ENCODE measurements at regions of chr16 and their contacts with region 1.

Region 1: DNA sequence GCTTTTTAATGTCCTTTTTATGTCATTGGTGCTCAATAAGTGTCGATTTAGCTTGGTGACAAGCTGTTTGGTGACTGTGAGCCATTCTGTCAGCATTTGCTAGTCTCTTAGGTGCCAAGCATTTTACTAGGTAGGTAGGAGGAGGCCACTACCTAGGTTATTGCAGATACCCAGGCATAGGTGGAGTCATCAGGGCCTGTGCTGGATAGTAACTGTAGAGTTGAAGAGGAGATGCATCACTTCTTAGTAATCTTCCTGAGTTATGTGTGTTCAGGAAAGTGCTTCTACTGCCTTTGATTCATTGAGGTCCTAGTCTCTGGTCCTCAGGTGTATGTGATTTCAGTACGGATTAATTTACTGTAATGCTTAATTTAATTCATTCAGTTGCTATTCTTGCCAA is 17.7 kb downstream of the USP10 start:
- DNase-seq: no peak
- H3K4me3 ChIP-seq: no peak overlapping the region
- H3K27ac ChIP-seq: no peak overlapping the region
- H3K4me1 ChIP-seq: peaks cover 11 to 24% of the 10 kb centered on the region in 2 donors
- H3K27me3 ChIP-seq: no peaks in the 10 kb centered on the region
- CTCF ChIP-seq: no peak
- POLR2A ChIP-seq: no peak

Region 2: DNA sequence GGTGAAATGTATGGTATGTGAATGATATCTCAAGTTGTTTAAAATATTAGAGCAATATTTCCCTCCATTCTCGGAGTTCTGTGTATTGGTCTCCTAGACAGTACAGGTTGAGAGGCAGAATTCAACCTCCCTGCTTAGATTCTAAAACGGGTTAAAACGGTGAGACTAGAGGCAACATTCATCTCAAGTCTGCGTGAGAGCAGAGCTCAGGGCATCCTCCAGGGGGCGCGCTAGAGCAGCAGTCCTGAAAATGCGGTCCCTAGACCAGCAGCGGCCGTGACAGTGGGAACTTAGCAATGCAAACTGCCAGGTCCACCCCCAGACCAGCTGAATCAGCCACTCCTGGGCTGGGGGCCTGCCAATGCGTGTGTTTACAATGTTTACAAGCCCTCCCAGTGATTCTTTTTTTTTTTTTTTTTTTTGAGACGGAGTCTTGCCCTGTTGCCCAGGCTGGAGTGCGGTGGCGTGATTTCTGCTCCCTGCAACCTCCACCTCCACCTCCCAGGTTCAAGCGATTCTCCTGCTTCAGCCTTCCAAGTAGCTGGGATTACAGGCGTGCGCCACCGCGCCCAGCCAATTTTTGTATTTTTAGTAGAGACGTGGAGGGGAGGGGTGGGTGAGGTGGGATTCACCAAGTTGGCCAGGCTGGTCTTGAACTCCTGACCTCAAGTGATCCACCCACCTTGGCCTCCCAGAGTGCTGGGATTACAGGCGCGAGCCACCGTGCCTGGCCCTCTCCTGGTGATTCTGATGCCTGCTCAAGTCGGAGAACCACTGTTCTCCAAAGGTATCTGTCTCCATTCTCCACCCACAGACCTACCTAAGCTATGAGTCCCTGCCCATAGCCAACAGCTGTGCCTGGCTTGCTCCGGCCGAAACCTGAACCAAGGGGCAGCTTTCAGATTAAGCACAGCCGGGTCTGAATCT is 44.9 kb before region 1 on chr16:
- intact Hi-C with region 1: loop called in 1 of 2 experiments (anchors 5 kb)
- DNase-seq: peak; percentile 71 to 92 (median 81)
- H3K4me3 ChIP-seq: no peak overlapping the region
- H3K27ac ChIP-seq: no peak overlapping the region
- H3K4me1 ChIP-seq: no peaks in the 10 kb centered on the region
- H3K27me3 ChIP-seq: no peaks in the 10 kb centered on the region
- CTCF ChIP-seq: peak; percentile 75 to 94 (median 90)
- POLR2A ChIP-seq: no peak